HEK293T (cell line): ENCODE measurements at regions of chr2 and their contacts with region 1.

Region 1: DNA sequence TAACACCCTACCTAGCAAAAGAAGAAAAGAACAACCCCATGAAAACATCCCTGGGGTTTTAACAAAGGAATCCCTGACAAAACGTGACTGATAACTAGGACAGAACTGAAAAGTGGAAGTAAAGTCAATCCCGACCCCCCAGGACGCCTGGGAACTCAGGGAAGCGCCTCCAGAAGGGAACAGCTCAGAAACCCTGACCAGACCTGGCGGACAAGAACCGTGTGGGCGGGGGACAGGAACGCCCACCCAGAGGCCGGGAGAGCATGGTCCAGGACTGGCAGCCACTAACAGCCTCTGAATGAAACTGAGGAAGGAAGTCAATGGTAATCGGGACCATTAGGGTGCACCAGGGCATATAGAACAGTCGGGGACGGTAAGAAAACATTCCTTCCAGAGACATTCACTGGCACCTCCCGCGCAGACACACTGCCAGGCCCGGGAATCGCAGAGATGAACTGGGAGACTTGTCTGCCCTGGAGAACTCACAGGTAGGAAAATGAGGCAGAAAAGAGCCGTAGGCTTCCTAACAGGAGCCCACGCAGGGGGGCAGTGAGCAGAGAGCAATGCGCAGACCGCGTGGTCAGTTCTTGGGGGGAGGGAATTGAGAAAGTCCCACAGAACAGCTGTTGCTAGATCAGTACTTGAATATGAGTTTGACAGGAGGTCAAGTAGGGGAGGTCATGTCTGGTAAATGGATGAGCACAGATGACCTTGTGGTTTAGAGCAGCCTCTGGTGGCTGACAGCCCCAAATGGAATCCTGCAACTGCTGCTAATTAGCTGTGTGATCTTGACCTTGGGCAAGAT is 1.3 kb upstream of the TBC1D8 start:
- DNase-seq: no peak

Region 2: GRCh38 chr2:101036562-101037457 is 115.7 kb before region 1 on chr2:
- CTCF ChIA-PET with region 1: interaction called, 16 read pairs
- POLR2A ChIA-PET with region 1: interaction called, 3 read pairs
- DNase-seq: no peak